ENCODE measurements at regions of chr5 and their contacts with region 1.

Region 1: GRCh38 chr5:158695595-158696330 is 404.0 kb downstream of the EBF1 start:
- DNase-seq: peak; percentile 51 to 66 (median 55)
- H3K4me3 ChIP-seq: no peak overlapping the region
- H3K4me3 Mint-ChIP-seq: peak overlapping the region in 3 of 8 donors; percentile 1 to 20 (median 6)
- H3K27ac ChIP-seq: no peak overlapping the region
- H3K27ac Mint-ChIP-seq: no peak overlapping the region
- H3K4me1 ChIP-seq: no peaks in the 10 kb centered on the region
- H3K4me1 Mint-ChIP-seq: peaks cover 3 to 5% (median 4%) of the 10 kb centered on the region in 4 donors
- H3K27me3 ChIP-seq: no peaks in the 10 kb centered on the region
- H3K27me3 Mint-ChIP-seq: peaks cover 8 to 11% of the 10 kb centered on the region in 2 donors

Region 2: GRCh38 chr5:157820593-157821252 is 875.0 kb before region 1 on chr5:
- CTCF ChIA-PET with region 1: no interaction called
- POLR2A ChIA-PET with region 1: no interaction called
- intact Hi-C with region 1: loop called (anchors 5 kb)
- DNase-seq: peak in 4 of 5 donors; percentile 23 to 28 (median 27)
- H3K4me3 ChIP-seq: no peak overlapping the region
- H3K4me3 Mint-ChIP-seq: peak overlapping the region in 1 of 8 donors; percentile 28
- H3K27ac ChIP-seq: no peak overlapping the region
- H3K27ac Mint-ChIP-seq: peak overlapping the region in 5 of 7 donors; percentile 14 to 73 (median 61)
- H3K4me1 ChIP-seq: peaks cover 9% of the 10 kb centered on the region
- H3K4me1 Mint-ChIP-seq: peaks cover 23 to 41% (median 33%) of the 10 kb centered on the region in 4 donors
- H3K27me3 ChIP-seq: no peaks in the 10 kb centered on the region
- H3K27me3 Mint-ChIP-seq: no peaks in the 10 kb centered on the region

Region 3: DNA sequence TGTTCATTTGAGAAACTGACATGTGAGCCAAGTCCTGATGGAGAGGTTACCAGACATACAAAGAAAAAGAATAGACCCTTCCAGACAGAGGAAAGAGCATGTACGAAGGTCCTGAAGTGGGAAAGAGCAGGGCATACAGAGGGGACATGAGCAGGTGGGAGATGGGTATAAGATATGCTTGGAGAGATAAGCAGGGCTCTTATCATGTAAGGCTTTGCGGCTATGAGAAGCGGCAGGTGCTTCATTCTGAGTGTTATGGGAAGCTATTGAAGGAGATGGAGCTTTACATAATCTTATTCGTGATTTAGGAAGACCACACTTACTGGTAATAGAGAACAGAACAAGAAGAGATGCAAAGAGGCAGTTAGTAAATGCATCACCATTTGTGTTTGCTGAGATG is 13.1 kb before region 1 on chr5:
- CTCF ChIA-PET with region 1: interaction called, 14 read pairs
- POLR2A ChIA-PET with region 1: no interaction called
- intact Hi-C with region 1: no loop called
- DNase-seq: no peak
- H3K4me3 ChIP-seq: no peak overlapping the region
- H3K4me3 Mint-ChIP-seq: no peak overlapping the region
- H3K27ac ChIP-seq: no peak overlapping the region
- H3K27ac Mint-ChIP-seq: no peak overlapping the region
- H3K4me1 ChIP-seq: no peaks in the 10 kb centered on the region
- H3K4me1 Mint-ChIP-seq: no peaks in the 10 kb centered on the region
- H3K27me3 ChIP-seq: no peaks in the 10 kb centered on the region
- H3K27me3 Mint-ChIP-seq: peaks cover 11 to 15% of the 10 kb centered on the region in 2 donors

Region 4: GRCh38 chr5:159003037-159004030 is 307.6 kb after region 1 on chr5:
- CTCF ChIA-PET with region 1: interaction called, 10 read pairs
- POLR2A ChIA-PET with region 1: no interaction called
- intact Hi-C with region 1: no loop called
- DNase-seq: peak; percentile 47 to 63 (median 60)
- H3K4me3 ChIP-seq: no peak overlapping the region
- H3K4me3 Mint-ChIP-seq: peak overlapping the region in 6 of 8 donors; percentile 10 to 74 (median 46)
- H3K27ac ChIP-seq: no peak overlapping the region
- H3K27ac Mint-ChIP-seq: peak overlapping the region in 6 of 7 donors; percentile 27 to 58 (median 36)
- H3K4me1 ChIP-seq: peaks cover 12% of the 10 kb centered on the region
- H3K4me1 Mint-ChIP-seq: peaks cover 11 to 30% (median 24%) of the 10 kb centered on the region in 4 donors
- H3K27me3 ChIP-seq: no peaks in the 10 kb centered on the region
- H3K27me3 Mint-ChIP-seq: peaks cover 6 to 14% of the 10 kb centered on the region in 2 donors

Region 5: DNA sequence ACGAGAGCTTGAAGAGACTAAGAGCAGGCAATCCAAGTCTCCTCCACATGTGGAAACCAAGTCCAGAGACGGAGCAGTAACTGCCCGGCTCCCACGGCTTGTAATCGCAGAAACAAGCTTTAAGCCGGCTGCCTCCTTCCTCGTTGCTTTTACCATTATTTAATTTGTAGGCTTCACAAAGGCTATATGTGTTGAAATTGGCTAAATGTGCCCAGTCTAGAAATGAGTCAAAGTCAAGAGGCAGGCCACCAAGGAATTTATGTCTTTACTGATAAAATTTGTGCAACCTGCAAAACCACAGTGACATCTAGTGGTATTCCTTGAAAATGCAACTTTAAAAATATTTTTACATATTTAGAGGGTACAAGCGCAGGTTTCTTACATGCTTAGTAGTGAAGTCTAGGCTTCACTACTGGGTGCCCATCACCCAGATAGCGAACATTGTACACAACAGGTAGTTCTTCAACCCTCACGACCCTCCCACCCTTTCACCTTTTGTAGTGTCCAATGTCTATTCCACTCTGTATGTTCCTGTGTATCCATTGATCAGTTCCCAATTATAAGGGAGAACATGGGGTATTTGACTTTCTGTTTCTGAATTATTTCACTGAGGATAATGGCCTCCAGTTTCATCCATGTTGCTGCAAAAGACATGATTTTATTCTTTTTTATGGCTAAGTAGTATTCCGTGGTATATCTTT is 437.4 kb after region 1 on chr5:
- CTCF ChIA-PET with region 1: interaction called, 243 read pairs
- POLR2A ChIA-PET with region 1: no interaction called
- intact Hi-C with region 1: no loop called
- DNase-seq: peak in 4 of 5 donors; percentile 43 to 52 (median 46)
- H3K4me3 ChIP-seq: no peak overlapping the region
- H3K4me3 Mint-ChIP-seq: no peak overlapping the region
- H3K27ac ChIP-seq: no peak overlapping the region
- H3K27ac Mint-ChIP-seq: no peak overlapping the region
- H3K4me1 ChIP-seq: no peaks in the 10 kb centered on the region
- H3K4me1 Mint-ChIP-seq: no peaks in the 10 kb centered on the region
- H3K27me3 ChIP-seq: peaks cover 3% of the 10 kb centered on the region
- H3K27me3 Mint-ChIP-seq: peaks cover 11 to 18% of the 10 kb centered on the region in 2 donors